Caco-2 (cell line): ENCODE measurements at regions of chr17 and their contacts with region 1.

Region 1: DNA sequence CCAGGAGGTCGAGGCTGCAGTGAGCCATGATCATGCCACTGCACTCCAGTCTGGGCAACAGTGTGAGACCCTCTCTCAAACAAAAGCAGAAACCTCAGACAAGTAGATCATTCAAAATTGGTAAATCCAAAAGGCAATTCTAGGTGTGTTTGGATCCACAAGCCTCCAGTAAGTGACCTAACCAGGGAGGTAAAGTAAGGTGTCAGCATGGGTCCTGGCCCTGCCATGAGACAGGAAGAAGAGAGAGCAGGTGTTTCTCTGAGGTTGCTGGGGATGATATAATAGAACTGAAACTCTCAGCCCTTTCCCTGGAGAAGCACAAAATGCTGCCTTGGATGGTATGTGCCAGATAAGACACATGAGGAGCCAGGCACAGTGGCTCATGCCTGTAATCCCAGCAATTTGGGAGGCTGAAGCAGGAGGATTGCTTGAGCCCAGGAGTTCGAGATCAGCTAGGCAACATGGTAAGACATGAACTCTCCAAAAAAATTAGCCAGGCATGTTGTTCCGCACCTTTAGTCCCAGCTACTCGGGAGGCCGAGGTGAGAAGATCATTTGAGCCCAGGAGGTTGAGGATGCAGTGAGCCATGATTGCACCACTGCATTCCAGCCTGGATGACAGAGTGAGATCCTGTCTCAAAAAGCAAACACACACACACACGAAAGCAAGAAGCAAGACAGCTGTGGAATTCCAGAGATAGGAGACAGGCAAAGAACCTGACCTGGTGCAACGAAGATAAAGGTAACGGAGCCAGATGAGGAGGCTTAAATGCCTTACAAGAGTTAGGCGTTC is 6.5 kb downstream of the TM4SF5 start:
- DNase-seq: peak; percentile 75 to 82
- H3K4me3 ChIP-seq: no peak overlapping the region
- H3K4me3 Mint-ChIP-seq: peak overlapping the region; percentile 55
- H3K27ac Mint-ChIP-seq: peak overlapping the region; percentile 94
- H3K4me1 ChIP-seq: peaks cover 31% of the 10 kb centered on the region
- H3K4me1 Mint-ChIP-seq: peaks cover 14% of the 10 kb centered on the region
- H3K27me3 ChIP-seq: no peaks in the 10 kb centered on the region
- H3K27me3 Mint-ChIP-seq: no peaks in the 10 kb centered on the region
- CTCF ChIP-seq: no peak

Region 2: DNA sequence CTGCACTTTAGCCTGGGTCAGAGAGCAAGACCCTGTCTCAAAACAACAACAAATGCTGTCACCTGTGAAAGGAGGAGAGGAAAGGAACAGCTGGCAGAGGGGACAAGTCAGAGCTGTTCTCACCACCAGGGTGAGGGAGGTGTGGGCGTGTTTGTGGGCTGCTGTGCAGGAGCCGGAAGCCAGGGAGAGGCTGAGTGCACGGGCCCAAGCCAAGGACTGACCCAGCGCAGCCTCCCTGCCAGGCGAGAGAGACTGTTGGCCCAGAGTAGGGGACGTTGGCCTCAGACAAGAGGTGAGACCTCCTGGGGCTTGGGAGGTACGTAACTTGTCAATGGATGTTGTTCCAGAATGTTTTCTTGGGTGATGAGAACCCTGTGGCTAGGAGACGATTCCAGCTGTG is 268.8 kb before region 1 on chr17:
- CTCF ChIA-PET with region 1: no interaction called
- POLR2A ChIA-PET with region 1: no interaction called
- intact Hi-C with region 1: no loop called
- DNase-seq: no peak
- H3K4me3 ChIP-seq: no peak overlapping the region
- H3K4me3 Mint-ChIP-seq: no peak overlapping the region
- H3K27ac Mint-ChIP-seq: no peak overlapping the region
- H3K4me1 ChIP-seq: peaks cover 17% of the 10 kb centered on the region
- H3K4me1 Mint-ChIP-seq: peaks cover 4% of the 10 kb centered on the region
- H3K27me3 ChIP-seq: no peaks in the 10 kb centered on the region
- H3K27me3 Mint-ChIP-seq: no peaks in the 10 kb centered on the region
- CTCF ChIP-seq: no peak

Region 3: DNA sequence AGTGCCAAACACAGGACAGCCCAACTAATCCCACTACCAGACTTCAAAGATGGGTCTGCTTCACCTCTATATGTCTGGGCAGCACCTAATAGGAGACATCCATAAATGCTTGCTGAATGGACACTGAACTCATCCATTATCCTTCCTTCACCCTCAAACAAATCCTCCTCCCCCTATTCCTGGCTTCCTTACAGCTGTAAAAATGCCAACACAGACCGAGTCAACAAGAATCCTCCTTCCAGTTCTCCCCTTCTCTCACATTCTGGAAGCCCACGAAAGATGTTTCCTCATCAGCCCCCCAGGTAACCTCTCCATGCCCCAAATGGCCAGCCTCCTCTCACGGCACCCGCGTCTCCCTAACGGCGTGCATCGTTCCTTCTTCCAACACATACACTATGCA is 86.5 kb before region 1 on chr17:
- CTCF ChIA-PET with region 1: no interaction called
- POLR2A ChIA-PET with region 1: no interaction called
- intact Hi-C with region 1: no loop called
- DNase-seq: no peak
- H3K4me3 ChIP-seq: no peak overlapping the region
- H3K4me3 Mint-ChIP-seq: no peak overlapping the region
- H3K27ac Mint-ChIP-seq: peak overlapping the region; percentile 10
- H3K4me1 ChIP-seq: no peaks in the 10 kb centered on the region
- H3K4me1 Mint-ChIP-seq: no peaks in the 10 kb centered on the region
- H3K27me3 ChIP-seq: no peaks in the 10 kb centered on the region
- H3K27me3 Mint-ChIP-seq: no peaks in the 10 kb centered on the region
- CTCF ChIP-seq: no peak

Region 4: GRCh38 chr17:4764595-4764994 is 13.6 kb before region 1 on chr17:
- CTCF ChIA-PET with region 1: no interaction called
- POLR2A ChIA-PET with region 1: no interaction called
- intact Hi-C with region 1: no loop called
- DNase-seq: no peak
- H3K4me3 ChIP-seq: no peak overlapping the region
- H3K4me3 Mint-ChIP-seq: no peak overlapping the region
- H3K27ac Mint-ChIP-seq: no peak overlapping the region
- H3K4me1 ChIP-seq: no peaks in the 10 kb centered on the region
- H3K4me1 Mint-ChIP-seq: no peaks in the 10 kb centered on the region
- H3K27me3 ChIP-seq: no peaks in the 10 kb centered on the region
- H3K27me3 Mint-ChIP-seq: no peaks in the 10 kb centered on the region
- CTCF ChIP-seq: no peak

Region 5: GRCh38 chr17:4796553-4796921 is 18.4 kb after region 1 on chr17:
- CTCF ChIA-PET with region 1: no interaction called
- POLR2A ChIA-PET with region 1: interaction called, 10 read pairs
- intact Hi-C with region 1: no loop called
- DNase-seq: peak in 1 of 2 experiments; percentile 49
- H3K4me3 ChIP-seq: peak overlapping the region; percentile 82
- H3K4me3 Mint-ChIP-seq: peak overlapping the region; percentile 98
- H3K27ac Mint-ChIP-seq: peak overlapping the region; percentile 95
- H3K4me1 ChIP-seq: no peaks in the 10 kb centered on the region
- H3K4me1 Mint-ChIP-seq: peaks cover 7% of the 10 kb centered on the region
- H3K27me3 ChIP-seq: no peaks in the 10 kb centered on the region
- H3K27me3 Mint-ChIP-seq: no peaks in the 10 kb centered on the region
- CTCF ChIP-seq: no peak

Region 6: DNA sequence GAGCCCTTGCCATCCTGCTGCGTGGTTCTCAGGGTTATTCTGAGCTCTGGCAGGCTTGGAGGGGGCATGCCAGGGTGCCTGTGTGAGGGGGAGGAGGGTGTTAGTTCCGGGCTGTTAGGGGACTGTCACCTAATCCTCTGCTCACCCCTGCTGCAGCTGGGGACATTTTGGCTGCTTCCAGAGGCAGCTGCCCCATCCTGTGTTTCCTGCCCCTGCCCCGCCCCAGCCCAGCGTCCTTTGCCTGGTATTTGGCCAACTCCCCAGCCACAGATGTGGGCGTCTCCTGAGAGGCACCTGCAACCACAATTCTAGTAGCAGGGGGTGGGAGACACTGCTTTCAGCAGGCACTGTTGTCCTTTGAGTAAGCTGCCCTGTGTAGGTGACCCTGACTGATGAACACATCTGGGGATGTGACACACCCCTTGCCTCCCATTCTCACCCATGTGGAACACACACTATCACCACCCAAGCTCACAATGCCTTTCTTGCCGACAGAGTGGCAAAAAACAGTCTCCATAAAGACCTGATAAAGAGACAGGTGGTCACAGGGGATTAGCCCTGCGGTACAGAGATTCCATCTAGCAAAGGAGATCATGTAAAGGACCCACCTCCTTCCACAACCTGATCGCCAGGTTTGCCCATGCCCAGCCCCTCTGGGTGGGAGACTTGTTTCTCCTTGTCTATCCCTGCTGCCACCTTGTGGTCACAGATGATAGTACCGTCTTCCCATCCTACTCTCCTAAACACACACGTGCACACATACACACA is 125.1 kb after region 1 on chr17 and contains the start of gene CHRNE:
- CTCF ChIA-PET with region 1: no interaction called
- POLR2A ChIA-PET with region 1: no interaction called
- intact Hi-C with region 1: no loop called
- DNase-seq: peak; percentile 70 to 78
- H3K4me3 ChIP-seq: no peak within 1 kb of the TSS
- H3K4me3 Mint-ChIP-seq: no peak within 1 kb of the TSS
- H3K27ac Mint-ChIP-seq: no peak within 1 kb of the TSS
- H3K4me1 ChIP-seq: peaks cover 3% of the 10 kb centered on the region; the same call in 1 of the 2 replicates
- H3K4me1 Mint-ChIP-seq: peaks cover 10% of the 10 kb centered on the region
- H3K27me3 ChIP-seq: no peaks in the 10 kb centered on the region
- H3K27me3 Mint-ChIP-seq: no peaks in the 10 kb centered on the region
- CTCF ChIP-seq: peak; percentile 33 to 51
- total RNA-seq, gene CHRNE: not detected in 2 replicates